ENCODE measurements at regions of chr1 and their contacts with region 1.

Region 1: GRCh38 chr1:171644805-171645483 is 7.5 kb downstream of the MYOC start:
- DNase-seq: peak; percentile 60 to 87
- ATAC-seq: peak; percentile 75 to 94 (median 86)
- H3K4me3 ChIP-seq: peak overlapping the region in 2 of 10 donors; percentile 21 to 25
- H3K27ac ChIP-seq: peak overlapping the region; percentile 46 to 91 (median 82)
- H3K4me1 ChIP-seq: peaks cover 5 to 25% (median 17%) of the 10 kb centered on the region in 9 donors
- H3K27me3 ChIP-seq: no peaks in the 10 kb centered on the region
- CTCF ChIP-seq: peak; percentile 71 to 89 (median 80)

Region 2: DNA sequence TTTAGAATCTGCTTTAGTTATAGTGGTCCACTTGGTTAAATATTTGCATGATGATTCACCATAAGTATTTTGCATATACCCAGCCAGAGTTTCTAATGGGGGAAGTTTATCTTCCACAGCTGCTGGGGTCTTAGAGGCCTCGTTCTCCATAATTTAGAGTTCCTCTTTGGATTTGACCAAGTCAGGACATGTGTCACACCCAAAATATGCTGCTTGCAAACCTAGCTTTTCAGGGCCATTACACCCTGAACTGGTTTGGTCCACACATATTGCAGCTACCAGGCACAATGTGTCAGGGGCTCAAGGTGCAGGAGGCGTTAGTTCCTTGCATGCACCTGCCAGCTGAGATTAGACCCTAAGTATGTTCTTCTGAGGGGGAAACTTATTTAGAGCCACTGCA is 348.0 kb before region 1 on chr1:
- intact Hi-C with region 1: no loop called
- DNase-seq: no peak
- ATAC-seq: no peak
- H3K4me3 ChIP-seq: no peak overlapping the region
- H3K27ac ChIP-seq: no peak overlapping the region
- H3K4me1 ChIP-seq: no peaks in the 10 kb centered on the region
- H3K27me3 ChIP-seq: peaks cover 0 to 6% (median 0%) of the 10 kb centered on the region in 7 donors
- CTCF ChIP-seq: no peak

Region 3: DNA sequence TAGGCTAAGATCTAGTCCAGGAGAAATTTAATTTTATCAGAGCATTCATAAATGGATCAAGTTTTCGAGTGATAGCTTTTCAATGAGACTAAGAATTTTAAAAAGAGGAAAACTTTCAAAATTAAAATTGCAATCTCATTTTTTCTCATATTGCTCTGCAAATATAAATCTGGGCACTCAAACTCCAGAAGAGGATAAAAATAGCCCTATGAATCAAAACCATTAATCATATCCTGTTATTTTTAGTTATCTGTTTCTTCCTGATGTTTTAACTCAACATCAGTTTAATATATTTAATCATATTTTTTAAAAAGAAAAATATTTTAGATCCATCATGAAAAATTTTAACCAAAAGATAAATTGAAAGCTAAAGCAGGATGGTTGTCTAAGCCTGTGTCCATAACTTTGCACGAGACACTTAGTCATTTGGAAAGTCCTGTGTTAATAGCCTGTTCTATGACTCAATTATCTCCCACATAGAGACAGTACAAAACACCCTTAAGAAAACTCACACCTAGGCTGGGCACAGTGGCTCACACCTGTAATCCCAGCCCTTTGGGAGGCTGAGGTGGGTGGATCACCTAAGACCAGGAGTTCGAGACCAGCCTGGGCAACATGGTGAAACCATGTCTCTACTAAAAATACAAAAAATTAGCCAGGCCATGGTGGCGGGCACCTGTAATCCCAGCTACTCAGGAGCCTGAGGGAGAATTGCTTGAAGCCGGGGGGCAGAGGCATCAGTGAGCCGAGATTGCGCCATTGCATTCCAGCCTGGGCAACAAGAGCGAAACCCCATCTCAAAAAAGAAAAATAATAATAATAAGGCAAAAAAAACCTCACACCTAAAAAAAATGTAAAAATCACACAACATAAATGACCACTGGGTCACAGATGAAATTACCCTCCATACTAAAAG is 176.6 kb before region 1 on chr1:
- intact Hi-C with region 1: no loop called
- DNase-seq: no peak
- ATAC-seq: no peak
- H3K4me3 ChIP-seq: no peak overlapping the region
- H3K27ac ChIP-seq: peak overlapping the region in 3 of 10 donors; percentile 0 to 61 (median 28)
- H3K4me1 ChIP-seq: peaks cover 0 to 14% (median 0%) of the 10 kb centered on the region in 9 donors
- H3K27me3 ChIP-seq: no peaks in the 10 kb centered on the region
- CTCF ChIP-seq: no peak

Region 4: GRCh38 chr1:171715813-171716251 is 70.9 kb after region 1 on chr1:
- intact Hi-C with region 1: loop called (anchors 1 to 5 kb)
- DNase-seq: no peak
- ATAC-seq: peak in 4 of 8 donors; percentile 21 to 40 (median 24)
- H3K4me3 ChIP-seq: no peak overlapping the region
- H3K27ac ChIP-seq: peak overlapping the region in 4 of 10 donors; percentile 31 to 63 (median 42)
- H3K4me1 ChIP-seq: peaks cover 0 to 31% (median 11%) of the 10 kb centered on the region in 9 donors
- H3K27me3 ChIP-seq: no peaks in the 10 kb centered on the region
- CTCF ChIP-seq: peak; percentile 29 to 70 (median 63)

Region 5: GRCh38 chr1:171741872-171742576 is 97.1 kb after region 1 on chr1 and contains the start of gene VAMP4:
- intact Hi-C with region 1: loop called in 1 of 10 experiments (anchors 5 kb)
- DNase-seq: peak; percentile 89 to 90
- ATAC-seq: peak; percentile 92 to 96 (median 94)
- H3K4me3 ChIP-seq: peak within 1 kb of the TSS; percentile 68 to 99 (median 89)
- H3K27ac ChIP-seq: peak within 1 kb of the TSS; percentile 85 to 97 (median 94)
- H3K4me1 ChIP-seq: peaks cover 3 to 56% (median 27%) of the 10 kb centered on the region in 9 donors
- H3K27me3 ChIP-seq: no peaks in the 10 kb centered on the region
- CTCF ChIP-seq: no peak
- total RNA-seq, gene VAMP4: 6.6 to 12.5 (median 9.2) TPM

Region 6: GRCh38 chr1:171841050-171841940 is 196.4 kb after region 1 on chr1 and contains the start of gene DNM3:
- intact Hi-C with region 1: no loop called
- DNase-seq: peak; percentile 75 to 85
- ATAC-seq: peak; percentile 96 to 99 (median 98)
- H3K4me3 ChIP-seq: peak within 1 kb of the TSS; percentile 67 to 95 (median 86)
- H3K27ac ChIP-seq: peak within 1 kb of the TSS in 9 of 10 donors; percentile 47 to 76 (median 72)
- H3K4me1 ChIP-seq: peaks cover 0 to 19% (median 15%) of the 10 kb centered on the region in 9 donors
- H3K27me3 ChIP-seq: peaks cover 0 to 29% (median 8%) of the 10 kb centered on the region in 7 donors
- CTCF ChIP-seq: no peak
- total RNA-seq, gene DNM3: 0.77 to 2.8 (median 2.2) TPM

Region 7: DNA sequence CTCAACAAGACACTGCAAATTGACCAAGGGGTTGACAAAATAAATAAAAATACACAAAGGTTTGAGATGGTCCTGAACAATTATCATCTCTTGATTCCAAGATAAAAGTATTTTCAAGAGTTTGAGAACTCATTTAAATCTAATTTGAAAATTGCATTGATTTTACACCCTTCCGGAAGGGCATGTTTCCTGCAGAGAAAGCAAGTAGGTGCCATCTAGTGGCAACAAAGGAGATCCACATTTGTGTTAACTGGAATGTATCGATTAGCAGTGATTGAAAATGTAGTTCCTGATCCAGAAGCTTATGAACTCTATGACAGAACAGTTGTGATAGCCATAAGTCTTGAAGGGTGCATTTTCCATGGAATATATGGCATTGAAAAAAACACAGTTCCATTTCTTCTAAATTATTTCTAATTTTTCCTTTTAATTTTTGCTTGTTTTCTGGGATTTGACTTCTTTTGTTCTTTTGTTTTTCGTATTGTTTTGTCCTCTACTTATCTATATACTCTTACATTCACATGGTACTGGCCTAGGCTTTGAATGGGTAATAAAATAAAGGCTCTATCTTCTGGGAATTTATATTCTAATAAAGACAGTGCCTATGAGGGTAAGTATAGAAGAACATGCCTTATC is 340.0 kb after region 1 on chr1:
- intact Hi-C with region 1: loop called in 8 of 10 experiments (anchors 2 to 10 kb)
- DNase-seq: no peak
- ATAC-seq: peak in 4 of 8 donors; percentile 46 to 75 (median 63)
- H3K4me3 ChIP-seq: no peak overlapping the region
- H3K27ac ChIP-seq: no peak overlapping the region
- H3K4me1 ChIP-seq: peaks cover 0 to 14% (median 0%) of the 10 kb centered on the region in 9 donors
- H3K27me3 ChIP-seq: no peaks in the 10 kb centered on the region
- CTCF ChIP-seq: peak; percentile 52 to 89 (median 78)